ENCODE measurements at regions of chr14 and their contacts with region 1.

Region 1: DNA sequence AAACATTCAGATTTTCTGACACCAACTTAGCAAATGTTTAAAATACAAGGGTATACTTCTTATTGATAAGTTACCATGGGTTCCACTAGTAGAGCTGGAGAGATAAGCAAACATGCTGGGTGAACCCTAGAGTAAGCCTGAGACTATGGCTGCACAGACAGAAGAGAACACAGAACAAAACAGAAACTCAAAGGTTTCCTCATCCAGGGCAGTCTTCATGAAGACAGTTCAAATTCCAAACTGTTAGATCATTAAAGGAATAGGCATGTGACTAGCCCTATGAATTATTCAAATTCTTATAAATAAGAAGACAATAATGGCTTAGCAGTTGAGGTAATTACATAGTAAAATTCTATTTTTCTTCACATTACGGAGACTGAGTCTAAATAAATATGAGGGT is 28.1 kb downstream of the BTBD7 start:
- DNase-seq: no peak
- H3K4me3 ChIP-seq: no peak overlapping the region
- H3K27ac ChIP-seq: no peak overlapping the region
- H3K4me1 ChIP-seq: no peaks in the 10 kb centered on the region
- H3K27me3 ChIP-seq: no peaks in the 10 kb centered on the region
- CTCF ChIP-seq: no peak
- POLR2A ChIP-seq: no peak

Region 2: DNA sequence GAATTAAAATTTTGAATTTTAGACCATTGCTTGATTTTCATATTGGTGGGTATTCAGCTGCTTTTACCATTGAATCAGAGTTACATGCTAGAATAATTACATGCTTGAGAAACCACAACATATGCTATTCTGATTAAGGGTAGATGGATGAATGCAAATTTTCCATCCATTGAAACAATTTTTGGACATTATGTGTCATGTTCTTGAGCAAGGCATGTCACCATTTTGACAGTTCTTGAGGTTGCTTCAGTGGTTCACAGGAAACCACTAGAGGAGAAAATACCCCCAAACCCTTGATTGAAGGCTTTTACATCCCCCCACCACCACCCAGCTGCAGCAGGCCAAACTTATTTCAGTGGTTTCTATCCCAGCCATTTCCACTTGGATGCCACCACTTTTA is 84.3 kb before region 1 on chr14:
- intact Hi-C with region 1: loop called (anchors 5 kb)
- DNase-seq: no peak
- H3K4me3 ChIP-seq: no peak overlapping the region
- H3K27ac ChIP-seq: no peak overlapping the region
- H3K4me1 ChIP-seq: no peaks in the 10 kb centered on the region
- H3K27me3 ChIP-seq: no peaks in the 10 kb centered on the region
- CTCF ChIP-seq: no peak
- POLR2A ChIP-seq: no peak